Heart left ventricle (tissue), 16 donors: ENCODE measurements at regions of chr17 and their contacts with region 1.

Region 1: GRCh38 chr17:76714822-76715495 is 4.2 kb upstream of the MXRA7 start:
- DNase-seq: peak; percentile 59 to 80 (median 70)
- ATAC-seq: peak in 1 of 4 donors; percentile 2
- H3K4me3 ChIP-seq: no peak overlapping the region
- H3K27ac ChIP-seq: peak overlapping the region in 11 of 12 donors; percentile 14 to 92 (median 65)
- H3K4me1 ChIP-seq: peaks cover 12 to 63% (median 46%) of the 10 kb centered on the region in 12 donors
- H3K27me3 ChIP-seq: no peaks in the 10 kb centered on the region
- CTCF ChIP-seq: peak; percentile 80 to 93 (median 86)
- POLR2A ChIP-seq: no peak

Region 2: DNA sequence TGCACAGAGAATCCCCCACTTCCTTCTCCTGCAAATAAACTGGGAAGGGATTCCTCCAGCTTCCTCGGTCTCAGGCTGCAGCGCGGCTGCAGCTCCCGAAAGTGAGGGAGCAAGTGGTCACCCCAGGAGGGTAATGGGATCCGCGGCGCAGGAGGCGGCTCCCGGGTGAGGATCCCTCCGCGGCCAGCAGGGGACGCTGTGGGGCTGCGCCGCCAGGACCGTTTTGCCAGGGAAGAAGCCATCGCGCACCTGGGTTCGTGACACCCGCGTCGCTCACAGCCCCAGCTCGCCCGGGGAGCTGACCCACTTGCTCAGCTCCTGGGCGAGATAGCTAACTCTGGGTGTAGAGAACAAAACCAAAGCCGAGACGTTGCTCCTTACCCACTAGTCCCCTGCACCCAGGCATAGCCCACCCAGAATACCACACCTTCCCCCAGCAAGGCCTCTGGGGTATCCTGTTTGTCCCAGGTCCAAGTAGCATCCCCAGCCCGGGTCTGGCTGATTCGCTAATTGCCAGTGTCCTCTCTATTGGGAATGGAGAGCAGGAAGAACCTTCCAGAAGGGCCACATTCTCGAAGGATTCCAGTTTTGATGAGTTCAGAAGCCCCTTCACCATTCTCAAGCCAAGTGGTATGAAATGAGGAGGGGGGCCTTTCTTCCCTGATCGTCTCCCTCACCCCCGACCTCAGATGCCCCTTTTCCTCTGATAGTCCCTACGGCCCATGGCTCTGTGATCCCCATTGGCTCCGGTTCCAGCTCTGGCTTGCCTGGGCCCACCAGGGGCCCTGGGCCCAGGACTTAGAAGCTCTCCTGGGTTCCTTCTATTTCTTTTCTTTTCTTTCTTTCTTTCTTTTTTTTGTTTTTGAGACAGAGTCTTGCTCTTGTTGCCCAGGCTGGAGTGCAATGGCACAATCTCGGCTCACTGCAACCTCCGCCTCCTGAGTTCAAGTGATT is 191.6 kb before region 1 on chr17:
- intact Hi-C with region 1: loop called in 1 of 10 experiments (anchors 10 kb)
- DNase-seq: peak; percentile 66 to 91 (median 75)
- ATAC-seq: peak; percentile 6 to 60 (median 47)
- H3K4me3 ChIP-seq: no peak overlapping the region
- H3K27ac ChIP-seq: no peak overlapping the region
- H3K4me1 ChIP-seq: peaks cover 2 to 40% (median 28%) of the 10 kb centered on the region in 12 donors
- H3K27me3 ChIP-seq: no peaks in the 10 kb centered on the region
- CTCF ChIP-seq: peak; percentile 97 to 100 (median 100)
- POLR2A ChIP-seq: no peak

Region 3: DNA sequence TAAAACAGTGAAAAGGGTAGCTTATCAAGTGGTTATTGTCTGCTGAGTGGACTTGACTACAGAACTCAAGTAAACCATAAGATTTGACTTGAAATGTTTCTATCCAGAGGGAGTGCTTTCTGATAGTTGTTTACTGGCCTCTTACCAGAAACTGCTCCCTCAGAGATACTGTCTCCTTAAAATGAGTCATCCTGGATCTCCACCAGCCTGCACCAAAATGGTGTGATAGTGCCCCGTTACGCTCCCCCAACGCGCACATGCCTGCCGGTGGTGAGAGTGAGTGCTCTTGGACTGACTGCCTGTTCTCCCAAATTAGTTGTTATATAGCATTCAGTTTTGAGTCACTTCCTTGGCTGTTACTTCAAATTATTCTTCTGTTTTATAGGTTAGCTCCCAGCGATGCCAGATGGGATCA is 152.2 kb before region 1 on chr17:
- intact Hi-C with region 1: loop called in 7 of 10 experiments (anchors 5 to 10 kb)
- DNase-seq: peak in 2 of 5 donors; percentile 57 to 59
- ATAC-seq: peak in 3 of 4 donors; percentile 63 to 73 (median 65)
- H3K4me3 ChIP-seq: no peak overlapping the region
- H3K27ac ChIP-seq: peak overlapping the region in 10 of 12 donors; percentile 6 to 84 (median 36)
- H3K4me1 ChIP-seq: peaks cover 5 to 65% (median 43%) of the 10 kb centered on the region in 12 donors
- H3K27me3 ChIP-seq: no peaks in the 10 kb centered on the region
- CTCF ChIP-seq: no peak
- POLR2A ChIP-seq: no peak

Region 4: DNA sequence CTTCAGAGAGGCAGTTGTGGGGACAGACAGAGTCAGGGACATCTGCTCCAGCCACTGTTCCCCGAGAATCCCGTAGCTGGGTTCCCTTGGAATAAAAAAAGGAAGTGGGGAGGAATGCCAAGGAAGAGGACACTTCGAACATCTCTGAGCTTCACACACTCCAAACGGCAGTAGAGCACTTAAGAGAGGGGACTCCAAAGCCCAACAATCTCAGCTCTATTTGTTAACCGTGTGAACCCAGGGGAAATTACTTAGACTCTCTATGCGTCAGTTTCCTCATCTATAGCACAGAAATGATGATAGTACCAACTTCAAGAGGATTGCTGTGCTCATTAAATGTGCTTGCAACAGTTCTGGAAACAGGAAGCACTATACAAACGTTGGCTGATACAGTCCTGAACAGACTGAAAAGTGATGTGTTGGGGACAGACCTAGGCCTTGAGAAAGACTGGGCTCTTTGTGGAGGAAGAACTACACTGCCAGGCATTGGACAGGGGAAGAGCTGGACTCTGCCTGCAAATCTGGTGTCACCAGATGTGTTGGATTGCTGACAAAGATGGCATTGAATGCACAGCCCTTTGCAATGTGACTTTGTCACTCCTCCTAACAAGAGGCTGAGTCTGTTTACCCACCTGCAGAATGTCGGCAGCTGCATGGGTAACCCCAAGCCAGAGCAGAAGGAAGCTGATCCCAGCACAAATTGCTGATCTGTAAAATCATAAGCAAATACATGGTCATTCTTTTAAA is 117.1 kb before region 1 on chr17:
- intact Hi-C with region 1: no loop called
- DNase-seq: no peak
- ATAC-seq: peak in 2 of 4 donors; percentile 35 to 70
- H3K4me3 ChIP-seq: no peak overlapping the region
- H3K27ac ChIP-seq: no peak overlapping the region
- H3K4me1 ChIP-seq: peaks cover 0 to 35% (median 4%) of the 10 kb centered on the region in 12 donors
- H3K27me3 ChIP-seq: no peaks in the 10 kb centered on the region
- CTCF ChIP-seq: no peak
- POLR2A ChIP-seq: no peak

Region 5: GRCh38 chr17:76659928-76660614 is 54.9 kb before region 1 on chr17:
- intact Hi-C with region 1: loop called in 1 of 10 experiments (anchors 10 kb)
- DNase-seq: peak in 1 of 5 donors; percentile 33
- ATAC-seq: peak; percentile 34 to 84 (median 62)
- H3K4me3 ChIP-seq: no peak overlapping the region
- H3K27ac ChIP-seq: peak overlapping the region in 3 of 12 donors; percentile 12 to 17 (median 16)
- H3K4me1 ChIP-seq: peaks cover 0 to 23% (median 18%) of the 10 kb centered on the region in 12 donors
- H3K27me3 ChIP-seq: no peaks in the 10 kb centered on the region
- CTCF ChIP-seq: no peak
- POLR2A ChIP-seq: no peak

Region 6: DNA sequence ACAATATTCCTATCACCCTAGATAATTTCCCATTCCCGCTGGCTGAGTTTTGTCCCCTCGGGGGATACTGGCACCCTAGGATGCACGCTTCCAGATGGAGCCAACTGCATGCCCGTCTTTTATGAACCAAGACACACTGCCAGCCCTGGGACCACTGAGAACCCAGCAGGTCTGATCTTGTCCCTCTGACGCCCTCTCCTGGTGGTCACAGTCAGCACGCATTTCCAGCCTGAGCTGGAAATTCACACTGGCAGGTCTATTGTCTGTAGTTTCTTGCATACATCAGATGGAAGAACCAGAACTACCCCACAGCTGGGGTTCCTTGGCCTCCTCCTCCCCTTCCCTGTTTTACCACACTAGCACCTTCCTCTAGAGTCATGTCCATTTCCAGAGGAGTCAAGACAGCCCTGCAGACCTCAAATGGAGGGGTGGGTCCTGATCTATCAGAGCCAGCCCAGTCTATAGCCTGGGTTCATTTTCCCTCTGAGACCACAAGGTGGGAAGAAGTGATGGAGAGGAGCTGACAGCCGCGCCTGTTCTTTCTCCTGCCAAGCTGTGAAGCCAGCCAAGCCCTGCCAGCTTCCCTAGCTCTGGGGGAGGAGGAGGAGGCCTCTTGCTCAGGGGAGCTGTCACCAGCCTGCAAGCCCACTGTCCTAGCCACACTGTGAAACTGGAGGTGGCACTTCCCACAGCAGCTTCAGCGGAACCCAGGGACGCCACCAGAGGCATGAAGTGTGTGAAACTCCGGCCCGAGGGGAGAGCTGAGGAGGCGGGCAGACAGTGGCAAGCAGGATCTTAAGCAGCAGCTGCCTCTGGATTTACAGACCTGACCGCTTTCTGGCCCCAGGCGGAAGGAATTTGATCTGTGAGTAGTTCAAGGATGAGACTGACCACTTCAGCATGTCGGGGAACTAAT is 33.5 kb before region 1 on chr17:
- intact Hi-C with region 1: loop called in 7 of 10 experiments (anchors 5 kb)
- DNase-seq: peak; percentile 69 to 82 (median 73)
- ATAC-seq: peak; percentile 52 to 71 (median 60)
- H3K4me3 ChIP-seq: peak overlapping the region in 2 of 12 donors; percentile 1 to 3
- H3K27ac ChIP-seq: peak overlapping the region; percentile 36 to 99 (median 89)
- H3K4me1 ChIP-seq: peaks cover 14 to 61% (median 51%) of the 10 kb centered on the region in 12 donors
- H3K27me3 ChIP-seq: no peaks in the 10 kb centered on the region
- CTCF ChIP-seq: peak; percentile 53 to 84 (median 74)
- POLR2A ChIP-seq: no peak

Region 7: DNA sequence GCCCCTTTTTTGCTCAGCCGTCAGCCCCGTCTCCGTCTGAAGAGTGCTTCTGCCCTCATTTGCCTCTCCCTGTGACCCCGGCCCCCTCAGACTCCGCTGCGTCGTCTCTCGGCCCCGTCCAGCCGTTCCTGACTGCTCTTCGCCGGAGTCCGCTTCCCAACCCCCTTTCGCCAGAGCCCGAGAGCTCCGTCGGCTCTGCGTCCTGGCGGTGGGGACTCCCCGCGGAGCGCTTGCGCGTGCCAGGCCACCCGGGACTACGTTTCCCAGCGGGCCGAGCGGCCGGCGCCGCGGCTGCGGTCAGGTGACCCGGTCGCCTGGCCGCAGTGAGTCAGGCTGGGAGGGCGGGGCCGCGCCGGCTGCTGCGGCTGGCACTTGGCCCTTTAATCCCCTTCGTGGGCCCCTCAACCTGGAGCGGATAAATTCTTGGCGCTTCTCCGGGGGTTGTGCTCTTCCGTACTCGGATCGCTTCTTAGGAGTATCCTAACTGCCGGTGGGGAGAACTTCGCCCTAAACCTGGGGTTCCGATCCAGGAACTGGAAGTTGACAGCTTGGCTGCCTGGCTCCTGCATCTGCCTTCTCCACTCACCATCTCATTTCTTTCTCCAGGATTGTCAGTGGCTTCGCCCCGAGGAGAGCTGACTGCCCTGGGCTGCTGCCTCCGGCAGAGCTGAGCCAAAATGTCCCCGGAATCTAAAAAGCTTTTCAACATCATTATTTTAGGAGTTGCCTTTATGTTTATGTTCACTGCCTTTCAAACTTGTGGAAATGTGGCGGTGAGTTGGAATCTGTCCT is 22.9 kb after region 1 on chr17 and contains the start of gene MFSD11:
- intact Hi-C with region 1: no loop called
- DNase-seq: peak; percentile 93 to 96 (median 94)
- ATAC-seq: peak; percentile 70 to 86 (median 84)
- H3K4me3 ChIP-seq: peak within 1 kb of the TSS; percentile 71 to 100 (median 94)
- H3K27ac ChIP-seq: peak within 1 kb of the TSS; percentile 97 to 100 (median 99)
- H3K4me1 ChIP-seq: peaks cover 5 to 72% (median 45%) of the 10 kb centered on the region in 12 donors
- H3K27me3 ChIP-seq: no peaks in the 10 kb centered on the region
- CTCF ChIP-seq: peak in 1 of 12 donors; percentile 5
- POLR2A ChIP-seq: peak in 1 of 2 donors; percentile 76
- total RNA-seq, gene MFSD11: 20.6 to 36.5 (median 27.9) TPM

Region 8: DNA sequence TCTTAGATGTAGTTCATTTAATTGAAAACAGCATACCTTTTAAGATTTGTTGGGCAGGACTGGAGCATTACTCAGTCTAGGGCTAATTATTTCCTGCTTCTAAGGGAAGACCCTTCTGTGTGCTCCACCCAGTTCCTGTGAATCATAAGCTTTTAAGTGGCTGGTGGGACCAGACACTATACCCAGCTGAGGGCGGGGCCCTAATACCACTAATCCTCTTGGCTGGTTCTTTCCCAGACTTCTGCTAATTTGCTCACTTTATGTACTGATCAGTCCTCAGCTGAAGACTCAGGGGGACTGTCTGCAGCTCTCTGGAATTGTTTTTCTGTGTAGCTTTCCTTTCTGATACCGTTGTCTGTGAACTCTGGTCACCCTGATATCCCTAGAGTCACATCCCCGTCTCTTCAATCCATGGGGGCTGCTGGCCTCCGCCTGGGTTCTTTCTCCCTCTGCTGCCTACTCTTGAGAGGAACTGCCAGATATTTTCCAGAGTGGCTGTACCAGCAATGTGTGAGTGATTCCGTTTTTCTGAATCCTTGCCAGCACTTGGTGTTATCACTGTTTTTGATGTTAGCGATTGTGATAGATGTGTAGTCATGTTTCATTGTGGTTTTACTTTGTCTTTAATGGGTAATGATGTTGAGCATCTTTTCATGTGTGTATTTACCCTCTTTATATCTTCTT is 58.0 kb after region 1 on chr17:
- intact Hi-C with region 1: no loop called
- DNase-seq: peak in 1 of 5 donors; percentile 38
- ATAC-seq: peak in 3 of 4 donors; percentile 83 to 89 (median 85)
- H3K4me3 ChIP-seq: peak overlapping the region in 1 of 12 donors; percentile 21
- H3K27ac ChIP-seq: peak overlapping the region in 4 of 12 donors; percentile 17 to 64 (median 53)
- H3K4me1 ChIP-seq: peaks cover 0 to 11% (median 6%) of the 10 kb centered on the region in 12 donors
- H3K27me3 ChIP-seq: no peaks in the 10 kb centered on the region
- CTCF ChIP-seq: no peak
- POLR2A ChIP-seq: no peak

Region 9: GRCh38 chr17:76816590-76817135 is 101.7 kb after region 1 on chr17:
- intact Hi-C with region 1: no loop called
- DNase-seq: no peak
- ATAC-seq: peak in 2 of 4 donors; percentile 48 to 62
- H3K4me3 ChIP-seq: no peak overlapping the region
- H3K27ac ChIP-seq: no peak overlapping the region
- H3K4me1 ChIP-seq: peaks cover 0 to 5% (median 0%) of the 10 kb centered on the region in 12 donors
- H3K27me3 ChIP-seq: peaks cover 0 to 10% (median 0%) of the 10 kb centered on the region in 9 donors
- CTCF ChIP-seq: peak; percentile 18 to 60 (median 44)
- POLR2A ChIP-seq: no peak